CD8-positive, alpha-beta T cell (primary cell): ENCODE measurements at regions of chrX and their contacts with region 1.

Region 1: DNA sequence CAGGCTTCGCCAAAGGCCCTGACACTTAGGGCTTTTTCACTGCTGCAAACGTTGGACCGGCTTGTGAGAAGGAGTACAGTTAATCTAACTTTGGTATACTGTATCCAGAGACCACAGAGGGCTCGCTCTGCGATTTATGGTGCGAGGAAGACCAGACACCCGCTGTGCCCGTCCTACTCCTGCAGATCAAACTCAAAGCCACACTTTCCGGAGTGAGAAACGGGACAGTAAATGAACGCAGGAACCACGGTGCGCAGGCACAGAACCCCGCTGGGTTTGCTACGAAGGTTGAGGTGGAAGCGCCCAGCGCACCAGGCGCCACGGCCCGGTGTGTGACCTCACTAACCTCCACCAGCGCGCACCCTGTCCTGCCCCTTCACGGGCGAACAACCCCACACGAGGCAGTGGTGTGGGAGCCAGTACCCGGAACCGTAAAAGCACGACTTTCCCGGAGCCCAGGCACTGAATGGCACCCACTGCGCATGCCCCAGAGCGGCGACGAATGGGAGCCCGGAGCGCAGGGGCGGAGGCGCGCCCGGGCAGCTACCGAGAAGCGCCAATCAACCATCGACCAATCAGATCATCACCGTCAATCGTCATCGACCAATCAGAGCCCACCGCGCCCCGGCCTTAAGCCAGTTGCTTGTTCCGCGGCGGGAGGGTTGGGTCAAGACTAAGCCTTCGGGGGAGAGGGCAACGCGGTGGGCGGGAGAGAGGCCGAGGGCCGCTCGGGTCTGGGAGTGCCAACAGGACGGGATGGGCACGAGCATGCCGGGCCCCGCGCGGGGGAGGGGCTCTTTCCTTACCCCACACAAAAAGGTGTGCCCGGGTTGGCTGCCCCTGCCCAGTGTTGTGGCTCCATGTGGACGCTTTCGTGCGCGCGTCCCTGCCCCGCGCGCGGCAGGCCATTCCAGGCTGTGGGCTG is 21.3 kb upstream of the WDR45 start:
- DNase-seq: peak; percentile 71 to 94 (median 86)
- ATAC-seq: peak; percentile 89
- H3K4me3 ChIP-seq: peak overlapping the region; percentile 74
- H3K4me3 Mint-ChIP-seq: peak overlapping the region; percentile 89
- H3K27ac ChIP-seq: peak overlapping the region; percentile 71 to 81
- H3K27ac Mint-ChIP-seq: peak overlapping the region; percentile 94
- H3K4me1 ChIP-seq: peaks cover 6% of the 10 kb centered on the region
- H3K4me1 Mint-ChIP-seq: peaks cover 7% of the 10 kb centered on the region
- H3K27me3 ChIP-seq: no peaks in the 10 kb centered on the region
- H3K27me3 Mint-ChIP-seq: no peaks in the 10 kb centered on the region
- CTCF ChIP-seq: no peak

Region 2: DNA sequence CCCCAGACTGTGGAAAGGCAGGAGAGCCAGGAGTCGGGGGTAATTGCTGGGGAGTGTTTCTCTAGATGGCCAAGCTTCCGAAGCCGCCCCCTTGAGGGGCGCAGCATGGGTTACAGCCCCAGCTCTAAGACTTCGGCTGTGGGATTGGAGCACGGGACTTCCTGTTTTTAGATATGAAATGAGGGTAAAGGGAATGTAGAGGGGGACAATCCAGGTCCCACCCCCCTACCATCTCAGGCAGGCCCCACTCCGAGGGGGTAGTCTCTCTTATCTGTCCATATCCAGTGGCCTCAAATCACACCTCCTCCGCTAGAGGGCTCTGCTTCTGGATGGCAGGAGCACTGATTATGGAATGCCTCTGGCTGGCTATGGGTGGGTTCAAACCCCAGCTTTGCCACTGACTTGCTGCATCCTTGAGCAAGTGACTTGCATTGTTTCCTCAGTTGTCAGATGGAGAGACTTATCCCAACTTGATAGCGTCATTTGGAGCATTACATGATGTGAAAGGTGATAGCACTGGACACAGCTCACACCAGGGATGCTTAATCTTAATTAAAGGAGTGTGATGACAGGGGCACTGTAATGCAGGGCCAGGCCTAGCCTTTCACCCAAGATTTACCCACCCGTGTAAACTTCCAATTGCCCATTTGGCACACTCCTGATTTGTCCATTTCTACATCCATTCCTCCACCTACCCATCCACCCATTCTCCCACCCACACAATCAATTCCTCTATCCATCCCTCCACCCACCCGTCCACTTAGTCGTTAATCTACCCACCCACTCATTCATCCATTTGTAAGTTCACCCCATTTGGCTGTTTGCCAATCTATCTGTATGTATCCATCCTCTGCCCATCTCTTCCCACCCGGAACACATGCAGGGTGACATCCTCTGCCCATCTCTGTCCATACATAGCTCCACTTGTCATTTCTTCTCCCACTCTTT is 128.5 kb before region 1 on chrX:
- CTCF ChIA-PET with region 1: no interaction called
- POLR2A ChIA-PET with region 1: no interaction called
- intact Hi-C with region 1: loop called in 1 of 2 experiments (anchors 10 kb)
- DNase-seq: peak in 5 of 9 experiments; percentile 25 to 56 (median 37)
- ATAC-seq: peak; percentile 46
- H3K4me3 ChIP-seq: peak overlapping the region in 1 of 2 experiments; percentile 22
- H3K4me3 Mint-ChIP-seq: peak overlapping the region; percentile 61
- H3K27ac ChIP-seq: no peak overlapping the region
- H3K27ac Mint-ChIP-seq: no peak overlapping the region
- H3K4me1 ChIP-seq: peaks cover 11% of the 10 kb centered on the region
- H3K4me1 Mint-ChIP-seq: peaks cover 15% of the 10 kb centered on the region
- H3K27me3 ChIP-seq: no peaks in the 10 kb centered on the region
- H3K27me3 Mint-ChIP-seq: no peaks in the 10 kb centered on the region
- CTCF ChIP-seq: no peak

Region 3: GRCh38 chrX:49053223-49054072 is 47.5 kb before region 1 on chrX:
- CTCF ChIA-PET with region 1: no interaction called
- POLR2A ChIA-PET with region 1: no interaction called
- intact Hi-C with region 1: loop called in 1 of 2 experiments (anchors 1 kb)
- DNase-seq: peak; percentile 8 to 82 (median 64)
- ATAC-seq: peak; percentile 82
- H3K4me3 ChIP-seq: peak overlapping the region; percentile 46 to 49
- H3K4me3 Mint-ChIP-seq: peak overlapping the region; percentile 87
- H3K27ac ChIP-seq: peak overlapping the region; percentile 66 to 82
- H3K27ac Mint-ChIP-seq: peak overlapping the region; percentile 93
- H3K4me1 ChIP-seq: peaks cover 12% of the 10 kb centered on the region
- H3K4me1 Mint-ChIP-seq: peaks cover 34% of the 10 kb centered on the region
- H3K27me3 ChIP-seq: no peaks in the 10 kb centered on the region
- H3K27me3 Mint-ChIP-seq: no peaks in the 10 kb centered on the region
- CTCF ChIP-seq: no peak

Region 4: GRCh38 chrX:49073601-49074571 is 27.1 kb before region 1 on chrX and contains the start of gene PRAF2:
- CTCF ChIA-PET with region 1: no interaction called
- POLR2A ChIA-PET with region 1: no interaction called
- intact Hi-C with region 1: loop called (anchors 1 kb)
- DNase-seq: peak; percentile 74 to 95 (median 89)
- ATAC-seq: peak; percentile 96
- H3K4me3 ChIP-seq: peak within 1 kb of the TSS; percentile 64 to 76
- H3K4me3 Mint-ChIP-seq: peak within 1 kb of the TSS; percentile 79
- H3K27ac ChIP-seq: peak within 1 kb of the TSS; percentile 81 to 82
- H3K27ac Mint-ChIP-seq: peak within 1 kb of the TSS; percentile 91
- H3K4me1 ChIP-seq: peaks cover 13% of the 10 kb centered on the region
- H3K4me1 Mint-ChIP-seq: peaks cover 17% of the 10 kb centered on the region
- H3K27me3 ChIP-seq: no peaks in the 10 kb centered on the region
- H3K27me3 Mint-ChIP-seq: no peaks in the 10 kb centered on the region
- CTCF ChIP-seq: no peak
- total RNA-seq, gene PRAF2: 16.7 to 17.5 TPM

Region 5: DNA sequence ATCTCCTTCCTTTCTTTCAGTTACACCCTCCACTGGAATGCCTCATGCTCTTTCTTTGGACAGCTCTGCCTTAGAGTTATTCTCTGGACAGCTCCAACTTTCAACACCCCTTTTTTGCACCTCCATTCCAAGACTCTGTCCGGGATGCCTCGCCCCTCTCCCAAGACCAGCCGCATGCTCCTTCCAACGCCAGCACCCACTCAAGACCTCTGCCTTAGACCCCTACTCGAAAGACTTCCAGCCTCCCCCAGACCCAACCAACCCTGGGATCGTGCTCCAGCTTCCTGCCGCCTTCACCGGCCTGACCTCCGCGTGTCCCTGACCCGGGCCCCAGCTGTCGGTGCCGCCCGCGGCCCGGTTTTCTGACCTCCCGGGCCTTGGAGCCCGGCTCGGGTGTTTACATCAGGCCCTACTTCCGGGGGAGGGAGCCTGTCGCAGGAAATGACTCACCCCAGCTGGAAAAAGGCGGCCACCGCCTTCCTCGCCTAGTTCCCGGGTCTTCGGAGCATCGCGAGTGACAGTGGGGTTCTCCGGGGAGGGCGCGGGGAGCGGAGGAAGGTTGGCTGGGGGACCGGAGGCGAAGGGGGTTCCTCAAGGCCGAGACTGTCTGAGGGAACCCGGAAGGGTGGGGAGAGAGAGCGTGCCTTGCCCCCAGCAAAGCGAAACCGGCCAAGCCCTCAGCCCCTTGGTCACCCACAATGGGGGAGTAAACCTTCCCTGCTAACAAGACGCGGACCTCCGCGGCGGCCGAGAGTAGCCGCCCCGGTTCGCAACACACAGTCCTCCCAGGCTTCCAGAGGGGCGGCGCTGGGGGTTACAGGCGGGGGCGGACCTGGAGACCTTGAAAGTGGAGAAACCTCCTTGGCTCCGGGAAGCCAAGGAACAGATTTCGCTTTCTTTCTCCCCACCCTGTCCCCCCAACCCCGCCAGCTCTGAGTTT is 21.2 kb before region 1 on chrX and contains the start of gene WDR45:
- CTCF ChIA-PET with region 1: no interaction called
- POLR2A ChIA-PET with region 1: no interaction called
- intact Hi-C with region 1: loop called (anchors 1 kb)
- DNase-seq: peak in 8 of 9 experiments; percentile 61 to 88 (median 76)
- ATAC-seq: peak; percentile 81
- H3K4me3 ChIP-seq: peak within 1 kb of the TSS; percentile 77 to 86
- H3K4me3 Mint-ChIP-seq: peak within 1 kb of the TSS; percentile 93
- H3K27ac ChIP-seq: peak within 1 kb of the TSS; percentile 95 to 99
- H3K27ac Mint-ChIP-seq: peak within 1 kb of the TSS; percentile 100
- H3K4me1 ChIP-seq: no peaks in the 10 kb centered on the region
- H3K4me1 Mint-ChIP-seq: peaks cover 12% of the 10 kb centered on the region
- H3K27me3 ChIP-seq: no peaks in the 10 kb centered on the region
- H3K27me3 Mint-ChIP-seq: no peaks in the 10 kb centered on the region
- CTCF ChIP-seq: no peak
- total RNA-seq, gene WDR45: 54.4 to 58.2 TPM

Region 6: GRCh38 chrX:49120099-49120498 is 19.1 kb after region 1 on chrX:
- CTCF ChIA-PET with region 1: no interaction called
- POLR2A ChIA-PET with region 1: interaction called, 3 read pairs
- intact Hi-C with region 1: loop called (anchors 1 to 2 kb)
- DNase-seq: no peak
- ATAC-seq: no peak
- H3K4me3 ChIP-seq: no peak overlapping the region
- H3K4me3 Mint-ChIP-seq: no peak overlapping the region
- H3K27ac ChIP-seq: no peak overlapping the region
- H3K27ac Mint-ChIP-seq: no peak overlapping the region
- H3K4me1 ChIP-seq: peaks cover 26% of the 10 kb centered on the region
- H3K4me1 Mint-ChIP-seq: peaks cover 48% of the 10 kb centered on the region
- H3K27me3 ChIP-seq: no peaks in the 10 kb centered on the region
- H3K27me3 Mint-ChIP-seq: no peaks in the 10 kb centered on the region
- CTCF ChIP-seq: no peak

Region 7: GRCh38 chrX:49155900-49156837 is 55.2 kb after region 1 on chrX:
- CTCF ChIA-PET with region 1: no interaction called
- POLR2A ChIA-PET with region 1: no interaction called
- intact Hi-C with region 1: no loop called
- DNase-seq: peak; percentile 69 to 91 (median 85)
- ATAC-seq: peak; percentile 94
- H3K4me3 ChIP-seq: peak overlapping the region; percentile 54 to 83
- H3K4me3 Mint-ChIP-seq: peak overlapping the region; percentile 92
- H3K27ac ChIP-seq: peak overlapping the region; percentile 78 to 80
- H3K27ac Mint-ChIP-seq: peak overlapping the region; percentile 95
- H3K4me1 ChIP-seq: peaks cover 7% of the 10 kb centered on the region
- H3K4me1 Mint-ChIP-seq: peaks cover 18% of the 10 kb centered on the region
- H3K27me3 ChIP-seq: no peaks in the 10 kb centered on the region
- H3K27me3 Mint-ChIP-seq: no peaks in the 10 kb centered on the region
- CTCF ChIP-seq: peak; percentile 36